ENCODE measurements at regions of chr11 and their contacts with region 1.

Region 1: DNA sequence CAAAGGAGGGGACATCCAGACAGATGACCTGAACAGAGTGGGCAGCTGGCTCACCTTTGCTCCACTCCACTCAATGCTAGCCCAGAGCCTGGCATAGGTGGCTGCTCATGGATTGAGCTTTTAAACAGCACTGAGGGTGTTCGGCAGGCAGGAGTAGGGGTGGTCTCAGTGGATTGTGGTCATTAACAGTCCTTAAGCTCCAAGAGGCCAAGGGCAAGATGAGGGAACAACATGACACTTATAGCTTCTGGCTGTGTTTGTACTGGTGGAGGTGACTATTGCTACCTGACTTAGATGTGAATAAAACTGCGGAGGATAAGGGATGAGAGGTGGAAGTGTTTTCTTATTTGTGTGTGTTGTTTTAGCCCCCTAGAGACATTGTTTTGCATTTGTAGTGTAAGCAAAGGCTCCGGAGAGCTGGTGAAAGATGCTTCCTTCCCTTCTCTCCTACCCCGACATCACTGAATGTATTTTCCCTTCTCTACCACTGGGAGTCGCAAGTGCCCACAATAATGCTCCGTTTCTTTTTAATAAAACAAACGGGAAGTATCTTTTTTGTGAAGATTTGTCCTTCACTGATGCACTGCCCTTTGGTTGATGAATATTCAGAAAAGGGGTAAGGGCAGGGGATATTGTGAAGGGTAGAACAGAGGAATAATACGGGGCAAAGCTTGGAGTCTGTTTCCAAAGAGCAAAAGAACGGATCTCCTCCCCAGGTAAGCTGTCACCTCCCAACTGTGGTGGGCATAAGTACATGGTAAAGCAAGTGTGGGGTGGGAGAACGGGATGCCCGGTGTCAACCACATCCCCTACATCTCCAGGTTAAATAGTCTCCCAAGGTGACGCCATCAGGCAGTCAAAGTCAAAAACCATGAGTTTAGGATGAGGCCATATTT is 27.5 kb upstream of the MTNR1B start:
- DNase-seq: peak; percentile 33 to 40
- ATAC-seq: peak in 1 of 2 experiments; percentile 74; a peak in 4 of 6 replicates
- H3K4me3 ChIP-seq: no peak overlapping the region
- H3K27ac ChIP-seq: peak overlapping the region; percentile 59 to 70; a peak in 4 of 6 replicates
- H3K4me1 ChIP-seq: peaks cover 5% of the 10 kb centered on the region; the same call in 2 of the 3 replicates
- CTCF ChIP-seq: peak; percentile 62
- EP300 ChIP-seq: no peak
- POLR2A ChIP-seq: no peak
- RAD21 ChIP-seq: peak; percentile 85 to 87

Region 2: DNA sequence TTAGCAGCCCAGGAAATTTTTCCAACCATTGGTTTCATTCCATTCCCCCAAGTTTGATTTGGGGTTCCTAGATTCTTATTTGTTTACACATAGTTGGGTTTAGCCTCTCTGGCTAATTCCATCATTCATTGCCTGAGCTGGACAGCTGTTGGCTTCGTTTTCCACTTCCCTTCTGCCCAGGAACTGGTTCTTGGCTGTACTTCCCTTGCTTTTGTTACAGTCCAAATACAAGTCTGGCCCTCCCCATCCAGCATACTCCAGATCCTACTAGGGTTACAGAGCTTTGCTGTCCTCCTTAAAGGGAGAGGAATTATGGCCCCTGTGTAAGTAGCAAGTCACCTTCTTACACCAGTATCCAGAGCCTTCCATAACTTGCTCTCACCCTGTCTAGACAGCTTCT is 361.0 kb before region 1 on chr11:
- CTCF ChIA-PET with region 1: no interaction called
- POLR2A ChIA-PET with region 1: no interaction called
- DNase-seq: no peak
- ATAC-seq: no peak
- H3K4me3 ChIP-seq: no peak overlapping the region
- H3K27ac ChIP-seq: no peak overlapping the region
- H3K4me1 ChIP-seq: no peaks in the 10 kb centered on the region
- CTCF ChIP-seq: no peak
- EP300 ChIP-seq: no peak
- POLR2A ChIP-seq: no peak
- RAD21 ChIP-seq: no peak

Region 3: GRCh38 chr11:92931746-92932422 is 10.0 kb before region 1 on chr11:
- CTCF ChIA-PET with region 1: interaction called, 23 read pairs
- POLR2A ChIA-PET with region 1: no interaction called
- DNase-seq: peak in 1 of 2 experiments; percentile 10
- ATAC-seq: no peak
- H3K4me3 ChIP-seq: no peak overlapping the region
- H3K27ac ChIP-seq: no peak overlapping the region
- H3K4me1 ChIP-seq: peaks cover 14% of the 10 kb centered on the region; the same call in 1 of the 3 replicates
- CTCF ChIP-seq: no peak
- EP300 ChIP-seq: no peak
- POLR2A ChIP-seq: no peak
- RAD21 ChIP-seq: no peak

Region 4: DNA sequence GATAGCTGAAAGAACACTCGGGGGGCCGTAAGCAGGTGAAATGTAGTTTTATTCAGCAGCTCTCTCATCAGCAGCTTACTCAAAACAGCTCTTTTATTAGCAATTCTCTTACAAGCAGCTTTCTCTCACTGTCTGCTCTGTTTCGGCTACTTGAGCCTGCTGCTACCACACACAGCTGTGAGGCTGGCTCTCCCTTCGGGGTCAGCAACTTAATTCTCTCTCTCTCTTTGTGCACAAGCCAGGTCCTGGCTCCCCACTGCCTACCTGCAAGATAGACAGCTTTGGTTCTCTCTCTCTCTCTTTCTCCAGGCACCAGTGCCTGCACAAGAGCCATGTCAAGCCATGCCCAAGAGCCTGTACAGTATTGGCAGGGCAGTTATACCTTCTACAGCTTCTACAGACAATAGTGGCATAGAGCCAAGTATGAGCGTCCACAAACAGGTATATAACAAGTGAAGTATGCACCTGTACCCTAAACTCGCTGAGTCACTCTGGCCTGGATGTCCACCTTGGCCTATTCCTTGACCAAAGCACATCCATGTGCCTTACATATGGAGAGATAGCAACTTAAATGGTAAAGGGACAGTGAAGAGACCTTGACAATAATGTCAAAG is 138.3 kb after region 1 on chr11:
- CTCF ChIA-PET with region 1: interaction called, 10 read pairs
- POLR2A ChIA-PET with region 1: no interaction called
- DNase-seq: no peak
- ATAC-seq: no peak
- H3K4me3 ChIP-seq: no peak overlapping the region
- H3K27ac ChIP-seq: 0 out of 6 replicates have a peak overlapping the region, but pooled peaks of 1 of the 2 experiments have one; percentile 34
- H3K4me1 ChIP-seq: no peaks in the 10 kb centered on the region
- CTCF ChIP-seq: no peak
- EP300 ChIP-seq: no peak
- POLR2A ChIP-seq: no peak
- RAD21 ChIP-seq: no peak

Region 5: DNA sequence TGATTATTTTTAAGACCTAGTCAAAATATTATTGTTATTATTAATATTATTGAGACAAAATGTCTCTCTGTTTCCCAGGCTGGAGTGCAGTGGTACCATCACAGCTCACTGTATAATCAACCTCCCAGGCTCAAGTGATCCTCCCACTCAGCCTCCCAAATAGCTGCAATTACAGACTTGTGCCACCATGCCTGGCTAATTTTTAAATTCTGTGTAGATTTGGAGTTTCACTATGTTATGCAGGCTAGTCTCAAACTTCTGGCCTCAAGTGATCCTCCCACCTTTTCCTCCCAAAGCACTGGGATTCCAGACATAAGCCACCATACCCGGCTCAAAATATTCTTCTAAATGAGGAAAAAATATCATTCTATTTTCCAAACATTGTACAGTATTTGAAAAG is 218.9 kb after region 1 on chr11:
- CTCF ChIA-PET with region 1: interaction called, 11 read pairs
- POLR2A ChIA-PET with region 1: no interaction called
- DNase-seq: no peak
- ATAC-seq: no peak
- H3K4me3 ChIP-seq: no peak overlapping the region
- H3K27ac ChIP-seq: no peak overlapping the region
- H3K4me1 ChIP-seq: no peaks in the 10 kb centered on the region
- CTCF ChIP-seq: no peak
- EP300 ChIP-seq: no peak
- POLR2A ChIP-seq: no peak
- RAD21 ChIP-seq: no peak

Region 6: GRCh38 chr11:93169950-93170561 is 228.1 kb after region 1 on chr11:
- CTCF ChIA-PET with region 1: interaction called, 28 read pairs
- POLR2A ChIA-PET with region 1: no interaction called
- DNase-seq: peak in 1 of 2 experiments; percentile 37
- ATAC-seq: peak in 1 of 2 experiments; percentile 50; a peak in 1 of 6 replicates
- H3K4me3 ChIP-seq: no peak overlapping the region
- H3K27ac ChIP-seq: no peak overlapping the region
- H3K4me1 ChIP-seq: no peaks in the 10 kb centered on the region
- CTCF ChIP-seq: peak; percentile 50
- EP300 ChIP-seq: no peak
- POLR2A ChIP-seq: no peak
- RAD21 ChIP-seq: peak; percentile 51 to 63

Region 7: DNA sequence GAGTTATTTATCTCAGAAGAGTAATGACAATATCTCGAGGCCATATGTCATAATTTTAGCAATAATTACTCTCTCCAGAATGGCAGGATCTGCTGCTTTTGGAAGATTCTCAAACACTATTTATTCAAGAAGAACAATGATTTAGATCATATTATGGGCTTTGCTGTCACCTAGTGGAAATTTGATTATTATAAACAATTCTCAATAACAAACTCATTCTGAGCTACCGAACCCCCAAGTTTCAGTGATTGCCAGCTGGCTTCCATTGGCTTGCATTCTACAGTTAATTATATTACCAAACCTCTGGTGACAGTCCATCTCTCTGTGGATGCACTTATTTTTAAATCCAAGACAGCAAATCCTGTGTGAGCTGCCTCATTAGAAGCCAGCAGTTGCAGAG is 283.7 kb after region 1 on chr11:
- CTCF ChIA-PET with region 1: interaction called, 31 read pairs
- POLR2A ChIA-PET with region 1: no interaction called
- DNase-seq: peak; percentile 9 to 13
- ATAC-seq: 0 out of 6 replicates have a peak, but pooled peaks of 1 of the 2 experiments have one; percentile 48
- H3K4me3 ChIP-seq: no peak overlapping the region
- H3K27ac ChIP-seq: no peak overlapping the region
- H3K4me1 ChIP-seq: peaks cover 10% of the 10 kb centered on the region; the same call in 1 of the 3 replicates
- CTCF ChIP-seq: peak; percentile 73
- EP300 ChIP-seq: no peak
- POLR2A ChIP-seq: no peak
- RAD21 ChIP-seq: peak; percentile 70 to 81

Region 8: DNA sequence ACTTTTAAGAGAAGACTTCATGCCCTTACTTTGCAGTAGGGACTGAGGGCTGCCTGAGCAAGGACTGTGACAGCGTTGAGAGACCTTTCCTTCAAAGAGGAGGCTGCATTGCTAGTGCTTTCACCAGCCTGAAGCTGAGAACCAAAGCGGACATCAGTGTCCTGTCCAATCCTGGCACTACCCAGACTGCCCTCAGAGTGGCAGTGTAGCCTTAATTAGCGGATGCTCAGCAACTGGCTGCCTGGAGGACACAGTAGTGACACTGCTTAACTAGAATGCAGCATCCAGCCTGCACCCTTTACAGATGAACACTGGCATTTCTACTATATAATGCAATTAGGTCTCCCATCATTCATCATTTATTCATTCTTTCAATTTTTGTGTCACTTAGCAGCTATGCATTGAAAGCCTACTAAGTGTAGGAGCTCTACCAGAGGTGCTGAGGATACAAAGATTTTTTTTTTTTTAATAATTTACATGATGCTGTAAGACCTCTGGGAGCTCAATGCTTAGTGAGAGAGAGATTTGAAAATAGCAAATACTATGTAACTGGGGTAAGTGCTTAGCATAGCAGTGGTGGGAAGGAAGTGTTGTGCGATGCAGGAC is 292.8 kb after region 1 on chr11:
- CTCF ChIA-PET with region 1: interaction called, 10 read pairs
- POLR2A ChIA-PET with region 1: no interaction called
- DNase-seq: peak; percentile 41 to 71
- ATAC-seq: peak; percentile 97 to 99
- H3K4me3 ChIP-seq: no peak overlapping the region
- H3K27ac ChIP-seq: no peak overlapping the region
- H3K4me1 ChIP-seq: no peaks in the 10 kb centered on the region
- CTCF ChIP-seq: peak; percentile 74
- EP300 ChIP-seq: no peak
- POLR2A ChIP-seq: no peak
- RAD21 ChIP-seq: peak; percentile 87 to 90

Measured in A549 (cell line).